Activated CD8-positive, alpha-beta T cell treated with anti-CD3 and anti-CD28 coated beads for 36 hours (primary cell): ENCODE measurements at regions of chr13 and their contacts with region 1.

Region 1: GRCh38 chr13:48885027-48885395 is 90.7 kb upstream of the FNDC3A start:
- DNase-seq: no peak
- ATAC-seq: no peak
- H3K4me3 Mint-ChIP-seq: no peak overlapping the region
- H3K27ac Mint-ChIP-seq: peak overlapping the region; percentile 84
- H3K4me1 Mint-ChIP-seq: peaks cover 57% of the 10 kb centered on the region
- H3K27me3 Mint-ChIP-seq: no peaks in the 10 kb centered on the region
- CTCF ChIP-seq: no peak

Region 2: GRCh38 chr13:48853728-48854102 is 31.3 kb before region 1 on chr13:
- CTCF ChIA-PET with region 1: no interaction called
- POLR2A ChIA-PET with region 1: interaction called, 3 read pairs
- intact Hi-C with region 1: loop called (anchors 2 kb)
- DNase-seq: peak; percentile 56
- ATAC-seq: peak; percentile 69
- H3K4me3 Mint-ChIP-seq: no peak overlapping the region
- H3K27ac Mint-ChIP-seq: peak overlapping the region; percentile 77
- H3K4me1 Mint-ChIP-seq: peaks cover 48% of the 10 kb centered on the region
- H3K27me3 Mint-ChIP-seq: peaks cover 7% of the 10 kb centered on the region
- CTCF ChIP-seq: no peak

Region 3: DNA sequence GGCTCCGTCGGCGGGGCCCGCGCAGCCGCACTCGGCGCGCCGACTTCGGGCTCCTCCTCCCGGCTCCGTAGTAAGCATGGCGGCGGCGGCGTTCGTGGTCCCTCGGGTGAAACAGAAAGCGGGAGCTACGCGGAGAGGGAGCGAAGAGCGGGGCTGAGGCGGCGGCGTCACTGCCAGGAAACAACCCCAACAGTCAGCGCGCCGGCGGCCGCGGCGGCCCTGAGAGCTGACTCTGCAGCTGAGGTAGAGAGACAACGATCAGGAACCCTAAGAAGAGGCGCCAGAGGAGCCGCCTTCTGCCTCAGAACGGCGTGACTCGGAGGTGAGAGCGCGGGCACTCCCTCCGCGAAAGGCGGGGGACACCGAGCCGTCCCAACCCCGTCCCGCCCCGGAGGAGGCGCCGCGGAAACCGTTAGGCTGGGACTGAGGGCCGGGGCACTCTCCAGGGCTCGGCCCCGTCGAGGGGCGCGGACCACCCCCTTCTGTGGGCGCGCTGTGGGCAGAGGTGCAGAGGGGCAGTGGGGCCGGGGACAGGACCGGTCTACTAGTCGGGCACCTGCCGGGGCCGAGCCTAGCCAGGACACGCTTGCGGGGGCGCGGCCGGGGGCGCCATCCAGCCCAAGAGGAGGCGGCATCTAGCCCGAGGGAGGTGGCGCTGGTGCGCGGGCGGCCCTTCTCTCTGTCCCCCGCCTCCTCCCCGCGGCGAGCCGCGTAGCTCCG is 91.0 kb after region 1 on chr13 and contains the start of gene FNDC3A:
- CTCF ChIA-PET with region 1: interaction called, 5 read pairs
- POLR2A ChIA-PET with region 1: interaction called, 13 read pairs
- intact Hi-C with region 1: no loop called
- DNase-seq: peak; percentile 92
- ATAC-seq: peak; percentile 78
- H3K4me3 Mint-ChIP-seq: peak within 1 kb of the TSS; percentile 93
- H3K27ac Mint-ChIP-seq: peak within 1 kb of the TSS; percentile 97
- H3K4me1 Mint-ChIP-seq: peaks cover 34% of the 10 kb centered on the region
- H3K27me3 Mint-ChIP-seq: no peaks in the 10 kb centered on the region
- CTCF ChIP-seq: no peak
- total RNA-seq, gene FNDC3A: 25.7 to 26.6 TPM

Region 4: GRCh38 chr13:49033101-49033500 is 148.1 kb after region 1 on chr13:
- CTCF ChIA-PET with region 1: no interaction called
- POLR2A ChIA-PET with region 1: no interaction called
- intact Hi-C with region 1: no loop called
- DNase-seq: no peak
- ATAC-seq: no peak
- H3K4me3 Mint-ChIP-seq: no peak overlapping the region
- H3K27ac Mint-ChIP-seq: no peak overlapping the region
- H3K4me1 Mint-ChIP-seq: peaks cover 9% of the 10 kb centered on the region
- H3K27me3 Mint-ChIP-seq: no peaks in the 10 kb centered on the region
- CTCF ChIP-seq: no peak